Aorta (tissue), 5 donors: ENCODE measurements at regions of chr2 and their contacts with region 1.

Region 1: DNA sequence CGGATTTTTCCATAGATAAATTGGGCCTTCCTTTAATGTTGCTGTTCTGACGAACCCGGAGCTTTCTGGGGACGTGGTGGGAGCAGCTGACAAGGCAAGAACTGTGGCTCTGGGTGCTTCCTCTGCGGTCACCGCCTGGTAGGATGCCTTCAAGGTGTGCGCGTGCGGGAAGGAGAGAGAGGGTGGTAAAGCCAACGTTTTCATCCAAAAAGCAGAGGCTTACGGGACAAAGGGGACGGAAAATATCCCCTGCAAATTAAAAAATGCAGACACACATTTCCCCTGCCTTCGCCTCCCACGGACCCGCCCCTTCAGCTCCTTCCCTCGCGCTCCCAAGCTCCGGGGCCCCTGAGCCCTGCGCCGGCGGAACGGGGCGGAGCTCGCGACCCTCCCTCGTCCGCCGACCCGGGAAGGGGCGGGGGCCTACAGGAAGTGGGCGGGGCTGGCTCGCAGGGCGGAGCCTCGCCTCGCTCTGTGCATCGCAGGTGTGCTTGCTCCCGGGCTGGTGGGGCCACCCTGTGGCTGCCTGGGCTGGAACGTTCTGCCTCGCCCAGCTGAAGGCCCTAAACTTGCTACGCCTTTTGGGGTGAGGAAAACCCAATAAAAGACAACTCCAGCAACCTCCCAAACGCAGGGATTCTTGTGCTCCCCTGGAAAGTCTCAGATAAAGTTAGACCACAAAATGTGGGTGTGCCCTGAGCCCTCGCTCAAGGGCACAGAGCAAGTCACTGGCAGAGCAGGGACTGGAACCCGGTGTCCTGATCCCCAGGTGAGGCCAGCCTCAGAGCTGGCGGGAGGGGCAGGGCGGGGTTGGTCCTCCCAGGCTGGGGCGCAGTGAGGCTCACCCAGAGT is 25.4 kb upstream of the SLC66A3 start:
- DNase-seq: peak; percentile 62 to 79
- ATAC-seq: no peak
- H3K4me3 ChIP-seq: peak overlapping the region in 1 of 2 donors; percentile 41
- H3K27ac ChIP-seq: no peak overlapping the region
- H3K4me1 ChIP-seq: no peaks in the 10 kb centered on the region
- H3K27me3 ChIP-seq: no peaks in the 10 kb centered on the region

Region 2: DNA sequence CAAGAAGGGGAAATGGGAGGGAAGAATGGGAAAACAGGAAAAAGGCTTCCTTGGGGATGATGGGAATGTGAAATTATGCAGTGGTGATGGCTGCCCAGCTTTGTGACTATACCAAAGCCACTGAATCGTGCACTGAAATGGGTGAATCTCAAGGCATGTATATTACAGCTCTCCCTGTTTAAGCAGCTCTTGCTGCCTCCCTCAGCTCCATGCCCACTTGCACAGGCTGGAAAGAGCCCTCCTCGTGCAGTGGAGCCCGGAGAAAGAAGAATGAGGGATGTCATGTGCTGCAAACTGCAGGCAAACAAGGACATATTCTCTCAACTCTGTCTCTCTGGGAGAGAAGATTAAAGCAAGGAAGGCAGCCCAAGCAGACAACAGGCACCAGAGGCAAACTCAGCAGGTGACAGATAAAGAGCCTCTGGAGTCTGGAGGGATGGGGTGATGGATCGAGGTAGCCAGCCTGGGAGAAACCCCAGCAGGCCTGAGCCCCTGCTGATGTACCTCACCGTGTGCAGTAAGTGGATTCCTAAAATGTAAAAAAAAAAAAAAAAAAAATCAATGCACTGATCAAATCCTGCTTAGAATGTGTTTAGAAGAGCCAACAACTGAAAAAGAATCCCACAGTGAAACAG is 37.0 kb before region 1 on chr2:
- intact Hi-C with region 1: loop called in 1 of 2 experiments (anchors 2 kb)
- DNase-seq: no peak
- ATAC-seq: no peak
- H3K4me3 ChIP-seq: no peak overlapping the region
- H3K27ac ChIP-seq: no peak overlapping the region
- H3K4me1 ChIP-seq: no peaks in the 10 kb centered on the region
- H3K27me3 ChIP-seq: no peaks in the 10 kb centered on the region

Region 3: GRCh38 chr2:11187083-11187619 is 57.3 kb after region 1 on chr2:
- intact Hi-C with region 1: loop called in 1 of 2 experiments (anchors 10 kb)
- DNase-seq: no peak
- ATAC-seq: no peak
- H3K4me3 ChIP-seq: no peak overlapping the region
- H3K27ac ChIP-seq: no peak overlapping the region
- H3K4me1 ChIP-seq: no peaks in the 10 kb centered on the region
- H3K27me3 ChIP-seq: no peaks in the 10 kb centered on the region

Region 4: GRCh38 chr2:11411768-11412448 is 282.1 kb after region 1 on chr2:
- intact Hi-C with region 1: loop called (anchors 2 to 10 kb)
- DNase-seq: peak in 1 of 2 donors; percentile 58
- ATAC-seq: peak; percentile 82
- H3K4me3 ChIP-seq: peak overlapping the region; percentile 62 to 78
- H3K27ac ChIP-seq: no peak overlapping the region
- H3K4me1 ChIP-seq: peaks cover 2 to 5% of the 10 kb centered on the region in 2 donors
- H3K27me3 ChIP-seq: no peaks in the 10 kb centered on the region

Region 5: DNA sequence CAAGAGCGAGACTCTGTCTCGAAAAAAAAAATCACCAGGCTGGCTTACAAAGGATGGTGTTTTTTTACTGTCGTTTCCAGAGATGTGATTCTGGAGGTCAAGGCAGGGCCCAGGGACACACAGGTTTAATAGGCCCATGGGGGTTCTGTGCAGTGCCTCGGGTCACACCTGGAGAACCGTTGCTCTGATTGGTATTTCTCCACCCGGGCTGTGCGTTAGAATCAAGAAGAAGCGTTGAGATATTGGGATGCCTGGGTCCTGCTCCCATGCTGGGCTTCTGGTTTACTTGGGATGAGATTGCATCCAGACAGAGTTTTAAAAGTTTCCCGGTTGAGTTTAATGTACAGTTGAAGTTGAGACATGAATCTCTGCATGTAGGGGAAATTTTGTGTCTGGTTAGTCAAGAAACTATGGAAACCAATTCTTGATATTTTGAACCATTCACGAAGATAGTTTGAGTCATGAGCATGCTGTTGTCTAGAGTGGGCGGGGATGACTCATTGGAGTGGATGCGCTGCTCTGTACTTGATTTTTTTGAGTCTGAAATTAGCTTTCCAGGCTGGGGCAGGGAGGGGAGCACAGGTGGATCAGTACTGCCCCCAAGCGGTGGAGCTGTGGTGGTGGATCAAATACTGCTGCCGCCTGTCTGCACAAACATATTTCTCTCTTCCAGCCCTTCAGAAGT is 454.2 kb after region 1 on chr2:
- intact Hi-C with region 1: loop called in 1 of 2 experiments (anchors 5 kb)
- DNase-seq: peak in 1 of 2 donors; percentile 70
- ATAC-seq: peak; percentile 80
- H3K4me3 ChIP-seq: no peak overlapping the region
- H3K27ac ChIP-seq: no peak overlapping the region
- H3K4me1 ChIP-seq: no peaks in the 10 kb centered on the region
- H3K27me3 ChIP-seq: no peaks in the 10 kb centered on the region